A549 (cell line): ENCODE measurements at regions of chr9 and their contacts with region 1.

Region 1: GRCh38 chr9:93827545-93828330 is 127.4 kb downstream of the BARX1 start:
- DNase-seq: peak; percentile 62 to 89
- ATAC-seq: peak; percentile 91 to 98
- H3K4me3 ChIP-seq: peak overlapping the region; percentile 26; the same call in 1 of the 3 replicates
- H3K27ac ChIP-seq: peak overlapping the region in 1 of 2 experiments; percentile 38; a peak in 2 of 6 replicates
- H3K4me1 ChIP-seq: 0 out of 3 replicates have a peak, but pooled peaks cover 3% of the 10 kb centered on the region
- CTCF ChIP-seq: peak; percentile 56
- EP300 ChIP-seq: no peak
- POLR2A ChIP-seq: no peak
- RAD21 ChIP-seq: peak in 1 of 2 experiments; percentile 46; a peak in 4 of 5 replicates

Region 2: GRCh38 chr9:93814077-93814956 is 13.4 kb before region 1 on chr9:
- CTCF ChIA-PET with region 1: interaction called, 17 read pairs
- POLR2A ChIA-PET with region 1: no interaction called
- DNase-seq: no peak
- ATAC-seq: peak; percentile 58 to 78; a peak in 4 of 6 replicates
- H3K4me3 ChIP-seq: no peak overlapping the region
- H3K27ac ChIP-seq: no peak overlapping the region
- H3K4me1 ChIP-seq: no peaks in the 10 kb centered on the region
- CTCF ChIP-seq: no peak
- EP300 ChIP-seq: no peak
- POLR2A ChIP-seq: no peak
- RAD21 ChIP-seq: no peak

Region 3: DNA sequence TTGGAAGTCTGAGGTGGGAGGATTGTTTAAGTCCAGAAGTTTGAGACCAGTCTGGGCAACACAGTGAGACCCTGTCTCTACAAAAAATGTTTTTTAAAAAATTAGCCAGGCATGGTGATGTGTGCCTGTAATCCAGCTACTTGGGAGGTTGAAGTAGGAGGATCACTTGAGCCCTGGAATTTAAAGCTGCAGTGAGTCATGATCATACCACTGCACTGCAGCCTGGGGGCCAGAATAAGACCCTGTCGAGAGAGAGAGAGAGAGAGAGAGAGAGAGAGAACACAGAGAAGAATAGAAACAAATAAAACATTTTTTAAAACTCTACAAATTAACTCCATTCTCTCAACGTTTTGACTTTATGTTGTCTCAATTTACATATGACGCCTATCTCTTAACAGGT is 15.7 kb after region 1 on chr9:
- CTCF ChIA-PET with region 1: interaction called, 24 read pairs
- POLR2A ChIA-PET with region 1: no interaction called
- DNase-seq: no peak
- ATAC-seq: no peak
- H3K4me3 ChIP-seq: no peak overlapping the region
- H3K27ac ChIP-seq: no peak overlapping the region
- H3K4me1 ChIP-seq: no peaks in the 10 kb centered on the region
- CTCF ChIP-seq: no peak
- EP300 ChIP-seq: no peak
- POLR2A ChIP-seq: no peak
- RAD21 ChIP-seq: no peak